ENCODE measurements at regions of chr15 and their contacts with region 1.

Region 1: DNA sequence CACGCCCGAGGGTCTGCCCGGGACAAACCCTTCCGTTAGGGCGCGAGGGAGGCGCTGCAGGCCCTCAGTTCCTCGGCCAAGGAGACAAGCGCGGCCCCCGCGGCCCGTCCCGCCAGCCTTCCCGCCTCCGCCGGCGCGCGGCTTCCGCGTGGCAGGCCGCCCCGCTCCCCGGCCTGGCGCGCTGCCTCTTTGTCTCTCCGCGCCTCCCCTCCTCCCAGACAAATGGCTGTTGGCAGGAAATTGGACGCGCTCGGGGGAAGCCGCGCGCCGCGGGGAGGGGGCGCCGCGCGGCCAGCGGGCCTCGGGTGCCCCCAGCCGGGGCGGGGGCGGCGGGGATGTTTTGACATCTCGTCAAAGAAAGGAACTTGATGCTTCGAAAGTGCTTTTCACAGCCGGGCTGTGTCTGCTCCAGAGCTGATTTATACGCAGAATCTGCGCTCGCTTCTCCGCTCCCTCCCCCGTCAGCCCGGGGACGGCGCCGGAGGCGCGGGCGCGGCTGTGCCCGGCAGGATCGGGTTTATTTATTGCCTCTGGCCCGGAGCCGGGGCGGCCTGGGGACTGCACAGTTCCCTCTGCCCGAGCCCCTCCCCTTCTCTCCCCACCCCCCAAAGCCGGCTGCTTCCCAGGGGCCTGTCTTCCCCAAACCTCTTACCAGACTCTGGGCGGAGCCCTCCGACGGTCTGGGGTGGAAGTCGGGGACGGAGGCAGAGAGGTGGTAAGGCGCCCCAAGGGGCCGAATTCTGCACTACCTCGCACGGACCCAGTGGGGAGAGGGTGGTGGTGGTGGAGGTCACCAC is 20.7 kb downstream of the SHF start:
- DNase-seq: peak; percentile 90
- ATAC-seq: peak; percentile 81
- H3K4me3 Mint-ChIP-seq: peak overlapping the region; percentile 57
- H3K27ac Mint-ChIP-seq: no peak overlapping the region
- H3K4me1 Mint-ChIP-seq: peaks cover 54% of the 10 kb centered on the region
- H3K27me3 Mint-ChIP-seq: peaks cover 1% of the 10 kb centered on the region
- CTCF ChIP-seq: peak; percentile 53

Region 2: GRCh38 chr15:45118131-45118588 is 48.9 kb before region 1 on chr15:
- CTCF ChIA-PET with region 1: interaction called, 59 read pairs
- POLR2A ChIA-PET with region 1: no interaction called
- DNase-seq: peak; percentile 93
- ATAC-seq: peak; percentile 92
- H3K4me3 Mint-ChIP-seq: peak overlapping the region; percentile 64
- H3K27ac Mint-ChIP-seq: no peak overlapping the region
- H3K4me1 Mint-ChIP-seq: peaks cover 30% of the 10 kb centered on the region
- H3K27me3 Mint-ChIP-seq: peaks cover 97% of the 10 kb centered on the region
- CTCF ChIP-seq: peak; percentile 86

Region 3: DNA sequence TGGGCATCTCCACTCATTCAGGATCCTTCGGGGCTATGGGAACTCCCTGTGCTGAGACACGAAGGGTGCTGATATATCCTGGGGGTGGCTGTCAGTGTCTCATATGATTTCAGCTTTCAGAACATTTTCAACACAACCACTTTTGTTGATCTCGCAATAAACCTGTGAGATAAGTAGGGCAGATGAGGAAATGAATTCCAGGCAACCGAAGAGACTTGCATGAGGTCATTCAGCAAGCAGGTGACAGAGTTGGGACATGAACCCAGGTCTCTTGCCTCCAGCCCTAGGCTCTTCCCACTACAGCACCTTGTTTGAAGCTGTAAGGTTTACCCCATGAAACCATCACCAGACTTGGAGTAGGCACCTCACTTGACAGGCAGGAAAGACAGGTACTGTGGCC is 20.6 kb before region 1 on chr15:
- CTCF ChIA-PET with region 1: interaction called, 16 read pairs
- POLR2A ChIA-PET with region 1: no interaction called
- DNase-seq: no peak
- ATAC-seq: no peak
- H3K4me3 Mint-ChIP-seq: no peak overlapping the region
- H3K27ac Mint-ChIP-seq: no peak overlapping the region
- H3K4me1 Mint-ChIP-seq: peaks cover 3% of the 10 kb centered on the region; the same call in 1 of the 2 replicates
- H3K27me3 Mint-ChIP-seq: peaks cover 11% of the 10 kb centered on the region
- CTCF ChIP-seq: no peak

Region 4: DNA sequence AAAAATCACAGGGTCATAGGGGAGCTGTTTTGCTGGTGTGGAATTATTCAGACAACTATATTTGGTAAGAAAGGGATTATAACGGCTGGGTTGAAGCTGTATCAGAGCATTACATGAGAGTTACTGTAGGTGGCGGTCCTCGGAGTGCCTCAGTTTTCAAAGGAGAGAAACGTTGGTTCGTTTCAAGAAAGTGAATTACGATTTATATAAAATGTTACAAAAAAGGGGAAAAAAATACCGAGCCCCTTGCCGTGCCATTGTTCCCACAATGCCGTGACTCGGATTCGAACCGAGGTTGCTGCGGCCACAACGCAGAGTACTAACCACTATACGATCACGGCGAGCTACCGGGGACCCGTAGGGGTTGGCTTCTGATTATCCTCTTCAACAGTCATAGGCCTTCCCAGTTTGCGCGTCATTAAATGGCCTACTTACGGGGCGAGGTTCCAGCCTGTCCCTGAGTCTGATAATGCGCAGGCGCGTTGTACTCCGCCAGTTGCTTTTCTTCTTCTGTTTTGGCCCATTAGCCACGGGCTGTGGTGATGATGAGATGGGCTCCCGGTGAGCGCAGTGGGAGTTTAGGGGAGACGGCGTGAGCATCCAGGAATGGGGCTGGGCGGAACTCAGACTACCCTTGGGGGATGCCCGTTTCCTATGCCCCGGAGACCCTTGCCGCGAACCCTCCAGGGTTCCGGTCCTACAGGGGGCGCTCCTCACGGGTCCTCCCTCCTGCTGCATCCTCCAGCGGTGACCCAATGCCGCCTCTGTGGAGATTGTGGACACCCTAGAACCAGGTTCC is 31.5 kb after region 1 on chr15:
- CTCF ChIA-PET with region 1: interaction called, 156 read pairs
- POLR2A ChIA-PET with region 1: interaction called, 6 read pairs
- DNase-seq: peak; percentile 90
- ATAC-seq: peak; percentile 62
- H3K4me3 Mint-ChIP-seq: no peak overlapping the region
- H3K27ac Mint-ChIP-seq: peak overlapping the region; percentile 87
- H3K4me1 Mint-ChIP-seq: peaks cover 7% of the 10 kb centered on the region
- H3K27me3 Mint-ChIP-seq: peaks cover 4% of the 10 kb centered on the region
- CTCF ChIP-seq: peak; percentile 46

Region 5: DNA sequence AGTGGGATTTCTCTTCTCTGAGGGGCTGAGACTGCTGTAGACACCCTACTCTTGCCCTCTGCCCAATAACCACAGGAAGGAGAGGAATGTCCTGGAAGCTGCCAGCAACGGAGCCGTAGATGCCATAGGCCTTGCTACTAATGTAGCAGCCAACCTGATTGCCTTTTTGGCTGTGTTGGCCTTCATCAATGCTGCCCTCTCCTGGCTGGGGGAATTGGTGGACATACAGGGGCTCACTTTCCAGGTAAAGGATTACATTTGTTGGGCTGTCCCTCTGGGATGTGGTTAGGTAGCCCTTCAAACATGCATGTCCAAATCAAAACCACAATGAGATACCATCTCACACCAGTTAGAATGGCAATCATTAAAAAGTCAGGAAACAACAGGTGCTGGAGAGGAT is 101.1 kb after region 1 on chr15:
- CTCF ChIA-PET with region 1: interaction called, 17 read pairs
- POLR2A ChIA-PET with region 1: no interaction called
- DNase-seq: peak; percentile 61
- ATAC-seq: peak; percentile 82
- H3K4me3 Mint-ChIP-seq: no peak overlapping the region
- H3K27ac Mint-ChIP-seq: no peak overlapping the region
- H3K4me1 Mint-ChIP-seq: no peaks in the 10 kb centered on the region
- H3K27me3 Mint-ChIP-seq: peaks cover 25% of the 10 kb centered on the region
- CTCF ChIP-seq: no peak

Region 6: GRCh38 chr15:45457641-45458433 is 290.8 kb after region 1 on chr15:
- CTCF ChIA-PET with region 1: interaction called, 16 read pairs
- POLR2A ChIA-PET with region 1: no interaction called
- DNase-seq: peak; percentile 62
- ATAC-seq: peak; percentile 81
- H3K4me3 Mint-ChIP-seq: peak overlapping the region; percentile 54
- H3K27ac Mint-ChIP-seq: peak overlapping the region; percentile 91; the same call in 1 of the 2 replicates
- H3K4me1 Mint-ChIP-seq: peaks cover 12% of the 10 kb centered on the region
- H3K27me3 Mint-ChIP-seq: peaks cover 55% of the 10 kb centered on the region
- CTCF ChIP-seq: peak; percentile 83